AG04449 (cell line): ENCODE measurements at regions of chr19 and their contacts with region 1.

Region 1: GRCh38 chr19:18846862-18847548 is 15.2 kb downstream of the UPF1 start:
- DNase-seq: no peak
- H3K4me3 ChIP-seq: no peak overlapping the region
- CTCF ChIP-seq: peak; percentile 99

Region 2: GRCh38 chr19:18456974-18457373 is 390.0 kb before region 1 on chr19:
- CTCF ChIA-PET with region 1: interaction called, 28 read pairs
- POLR2A ChIA-PET with region 1: no interaction called
- DNase-seq: no peak
- H3K4me3 ChIP-seq: no peak overlapping the region
- CTCF ChIP-seq: no peak

Region 3: DNA sequence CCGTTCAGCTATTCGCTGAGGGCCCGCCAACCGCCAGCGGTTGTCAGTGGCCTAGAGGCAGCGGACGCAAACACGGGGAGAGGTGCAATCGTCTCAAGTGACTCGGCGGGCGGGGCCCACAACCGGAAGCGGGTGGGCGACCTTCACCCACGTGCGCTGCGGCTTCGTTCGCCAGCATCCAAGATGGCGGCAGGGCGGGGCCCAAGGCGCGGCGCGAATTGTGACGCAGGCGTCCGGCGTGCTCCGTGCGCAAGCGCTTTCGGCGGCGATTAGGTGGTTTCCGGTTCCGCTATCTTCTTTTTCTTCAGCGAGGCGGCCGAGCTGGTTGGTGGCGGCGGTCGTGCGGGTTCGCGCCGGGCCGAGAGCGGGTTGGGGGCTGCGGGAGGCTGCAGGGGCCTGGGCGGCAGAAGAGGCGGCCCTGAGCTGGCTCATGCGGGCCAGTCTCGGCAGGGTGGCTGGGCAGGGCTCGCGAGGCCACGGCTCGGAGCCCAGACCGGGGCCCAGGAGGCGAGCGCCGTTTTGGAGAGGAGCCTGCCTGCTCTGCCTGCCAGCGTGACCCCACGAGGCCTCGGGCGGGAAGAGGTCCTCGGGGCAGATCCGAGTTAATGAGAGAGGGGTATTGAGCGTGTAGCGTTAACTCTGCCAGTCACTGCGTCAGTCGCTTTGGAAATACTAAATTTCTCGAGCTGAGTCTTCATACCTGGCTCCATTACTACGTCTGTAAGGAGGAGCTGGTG is 275.3 kb before region 1 on chr19 and contains the start of gene UBA52:
- CTCF ChIA-PET with region 1: interaction called, 22 read pairs
- POLR2A ChIA-PET with region 1: interaction called, 3 read pairs
- DNase-seq: peak; percentile 62
- H3K4me3 ChIP-seq: peak within 1 kb of the TSS; percentile 96
- CTCF ChIP-seq: no peak

Region 4: GRCh38 chr19:18588611-18589379 is 258.2 kb before region 1 on chr19 and contains the start of gene REX1BD:
- CTCF ChIA-PET with region 1: interaction called, 286 read pairs
- POLR2A ChIA-PET with region 1: interaction called, 3 read pairs
- DNase-seq: no peak
- H3K4me3 ChIP-seq: peak within 1 kb of the TSS; percentile 72
- CTCF ChIP-seq: peak; percentile 97

Region 5: GRCh38 chr19:18725841-18726770 is 120.9 kb before region 1 on chr19:
- CTCF ChIA-PET with region 1: no interaction called
- POLR2A ChIA-PET with region 1: no interaction called
- DNase-seq: no peak
- H3K4me3 ChIP-seq: no peak overlapping the region
- CTCF ChIP-seq: no peak

Region 6: GRCh38 chr19:18831524-18832305 is 15.3 kb before region 1 on chr19 and contains the start of gene UPF1:
- CTCF ChIA-PET with region 1: interaction called, 149 read pairs
- POLR2A ChIA-PET with region 1: interaction called, 4 read pairs
- DNase-seq: no peak
- H3K4me3 ChIP-seq: peak within 1 kb of the TSS; percentile 87
- CTCF ChIP-seq: no peak

Region 7: DNA sequence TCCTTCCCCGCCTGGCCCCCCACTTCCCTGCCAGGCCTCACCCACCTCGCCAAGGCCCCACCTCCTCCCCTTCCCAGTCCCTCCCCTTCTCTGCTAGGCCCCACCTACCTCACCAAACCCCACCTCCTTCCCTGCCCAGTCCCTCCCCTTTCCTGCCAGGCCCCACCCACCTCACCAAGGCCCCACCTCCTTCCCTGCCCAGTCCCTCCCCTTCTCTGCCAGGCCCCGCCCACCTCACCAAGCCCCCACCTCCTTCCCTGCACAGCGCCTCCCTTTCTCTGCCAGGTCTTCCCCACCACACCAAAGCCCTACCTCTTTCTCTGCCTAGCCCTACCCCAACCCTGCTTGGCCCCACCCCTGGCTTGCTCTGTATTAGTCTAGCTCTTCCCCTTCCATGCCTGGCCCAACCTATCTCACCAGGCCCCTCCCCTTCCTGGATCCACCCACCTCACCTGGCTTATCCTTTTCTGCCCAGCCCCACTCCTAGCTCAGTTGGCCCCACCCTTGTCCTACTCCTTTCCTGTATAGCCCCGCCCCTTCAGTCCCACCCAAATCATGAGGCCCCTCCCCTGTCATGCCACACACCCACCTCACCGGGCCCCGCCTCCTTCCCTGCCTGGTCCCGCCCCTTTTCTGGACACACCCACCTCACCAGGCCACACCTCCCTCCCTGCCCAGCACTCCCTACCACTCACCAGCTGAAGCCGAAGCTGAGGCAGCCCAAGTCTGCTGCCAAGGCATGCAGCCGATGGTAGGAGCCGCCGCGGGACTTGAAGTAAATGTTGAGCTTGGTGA is 32.8 kb after region 1 on chr19:
- CTCF ChIA-PET with region 1: interaction called, 16 read pairs
- POLR2A ChIA-PET with region 1: no interaction called
- DNase-seq: no peak
- H3K4me3 ChIP-seq: no peak overlapping the region
- CTCF ChIP-seq: no peak